CD4-positive, alpha-beta memory T cell (primary cell): ENCODE measurements at regions of chr2 and their contacts with region 1.

Region 1: GRCh38 chr2:176126929-176127773 is 2.4 kb upstream of the HOXD8 start:
- DNase-seq: peak; percentile 56 to 64 (median 58)
- H3K4me3 ChIP-seq: no peak overlapping the region
- H3K4me3 Mint-ChIP-seq: peak overlapping the region in 2 of 8 donors; percentile 7 to 17
- H3K27ac ChIP-seq: no peak overlapping the region
- H3K27ac Mint-ChIP-seq: peak overlapping the region in 2 of 7 donors; percentile 31 to 89
- H3K4me1 ChIP-seq: peaks cover 38% of the 10 kb centered on the region
- H3K4me1 Mint-ChIP-seq: peaks cover 10 to 45% (median 27%) of the 10 kb centered on the region in 4 donors
- H3K27me3 ChIP-seq: peaks cover 78% of the 10 kb centered on the region
- H3K27me3 Mint-ChIP-seq: peaks cover 61 to 63% of the 10 kb centered on the region in 2 donors

Region 2: DNA sequence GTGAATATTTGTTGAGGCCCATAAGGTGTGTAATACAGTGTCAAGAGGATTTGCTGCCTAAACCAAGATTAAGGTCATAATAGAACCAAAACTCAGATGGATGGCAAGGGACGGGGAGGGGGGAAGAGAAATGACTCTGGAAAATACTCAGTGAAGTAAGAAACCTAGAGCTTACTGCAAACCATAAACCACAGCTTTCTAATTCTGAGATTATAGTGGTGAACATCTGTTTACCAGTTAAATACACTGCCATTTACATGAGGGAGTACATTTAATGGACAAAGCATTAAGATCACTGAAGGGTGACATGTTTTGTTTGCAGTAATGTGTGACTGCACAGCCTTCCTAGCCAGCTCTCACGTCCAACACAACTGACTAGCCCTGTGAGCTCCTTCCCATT is 63.2 kb before region 1 on chr2:
- CTCF ChIA-PET with region 1: no interaction called
- POLR2A ChIA-PET with region 1: no interaction called
- intact Hi-C with region 1: no loop called
- DNase-seq: no peak
- H3K4me3 ChIP-seq: no peak overlapping the region
- H3K4me3 Mint-ChIP-seq: no peak overlapping the region
- H3K27ac ChIP-seq: no peak overlapping the region
- H3K27ac Mint-ChIP-seq: no peak overlapping the region
- H3K4me1 ChIP-seq: peaks cover 6% of the 10 kb centered on the region
- H3K4me1 Mint-ChIP-seq: peaks cover 0 to 17% (median 5%) of the 10 kb centered on the region in 4 donors
- H3K27me3 ChIP-seq: peaks cover 9% of the 10 kb centered on the region
- H3K27me3 Mint-ChIP-seq: peaks cover 48 to 49% of the 10 kb centered on the region in 2 donors

Region 3: GRCh38 chr2:176110975-176111663 is 16.0 kb before region 1 on chr2:
- CTCF ChIA-PET with region 1: interaction called, 12 read pairs
- POLR2A ChIA-PET with region 1: no interaction called
- intact Hi-C with region 1: no loop called
- DNase-seq: no peak
- H3K4me3 ChIP-seq: no peak overlapping the region
- H3K4me3 Mint-ChIP-seq: peak overlapping the region in 4 of 8 donors; percentile 17 to 32 (median 27)
- H3K27ac ChIP-seq: no peak overlapping the region
- H3K27ac Mint-ChIP-seq: peak overlapping the region in 4 of 7 donors; percentile 57 to 81 (median 70)
- H3K4me1 ChIP-seq: peaks cover 10% of the 10 kb centered on the region
- H3K4me1 Mint-ChIP-seq: peaks cover 9 to 26% (median 17%) of the 10 kb centered on the region in 4 donors
- H3K27me3 ChIP-seq: peaks cover 67% of the 10 kb centered on the region
- H3K27me3 Mint-ChIP-seq: peaks cover 62 to 70% of the 10 kb centered on the region in 2 donors

Region 4: DNA sequence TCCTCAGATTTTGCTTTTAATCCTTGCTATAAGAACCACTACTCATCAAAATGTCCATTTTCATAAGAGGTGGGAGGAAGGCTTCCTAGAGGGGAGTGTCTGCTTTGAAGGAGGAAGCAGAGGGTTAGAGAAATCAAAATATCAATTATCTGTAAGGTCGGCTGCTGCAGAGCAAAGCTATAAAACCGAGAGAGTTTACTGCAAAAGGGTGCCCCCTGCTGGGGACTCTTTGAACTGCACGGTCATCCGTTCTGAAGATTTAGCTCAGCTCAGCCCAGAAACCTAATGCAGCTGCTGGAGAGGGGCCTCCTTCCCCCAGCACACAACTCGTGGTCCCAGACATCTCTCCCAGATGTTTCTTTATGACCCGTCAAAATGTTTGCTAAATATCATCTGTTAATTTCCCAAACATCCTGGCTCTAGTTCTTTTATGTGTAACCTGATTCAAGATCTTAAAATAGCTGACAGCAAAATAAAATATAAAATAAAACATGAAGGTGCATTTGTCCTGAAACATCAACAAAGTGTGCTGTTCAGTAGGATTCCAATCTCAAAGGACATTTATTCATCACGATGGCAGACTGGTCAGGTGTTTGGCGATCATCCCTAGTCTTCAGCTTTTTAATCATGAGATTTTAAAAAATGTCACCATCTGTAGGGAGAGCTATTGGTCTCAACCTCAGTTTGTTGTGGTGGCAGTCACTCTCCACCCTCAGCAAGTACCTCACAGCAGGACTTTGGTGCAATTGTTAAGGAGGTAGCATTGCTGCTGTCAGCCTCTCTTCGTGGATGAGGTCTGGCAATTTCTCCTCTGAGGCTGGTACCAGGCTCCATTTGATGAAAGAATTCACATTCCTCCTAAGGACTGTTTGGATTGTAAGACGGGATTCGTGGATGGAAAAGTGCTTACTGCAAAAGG is 328.0 kb after region 1 on chr2:
- CTCF ChIA-PET with region 1: interaction called, 127 read pairs
- POLR2A ChIA-PET with region 1: interaction called, 12 read pairs
- intact Hi-C with region 1: loop called (anchors 1 kb)
- DNase-seq: peak; percentile 54 to 68 (median 63)
- H3K4me3 ChIP-seq: no peak overlapping the region
- H3K4me3 Mint-ChIP-seq: no peak overlapping the region
- H3K27ac ChIP-seq: no peak overlapping the region
- H3K27ac Mint-ChIP-seq: no peak overlapping the region
- H3K4me1 ChIP-seq: peaks cover 5% of the 10 kb centered on the region
- H3K4me1 Mint-ChIP-seq: peaks cover 0 to 2% (median 0%) of the 10 kb centered on the region in 4 donors
- H3K27me3 ChIP-seq: peaks cover 8% of the 10 kb centered on the region
- H3K27me3 Mint-ChIP-seq: peaks cover 10 to 29% of the 10 kb centered on the region in 2 donors

Region 5: DNA sequence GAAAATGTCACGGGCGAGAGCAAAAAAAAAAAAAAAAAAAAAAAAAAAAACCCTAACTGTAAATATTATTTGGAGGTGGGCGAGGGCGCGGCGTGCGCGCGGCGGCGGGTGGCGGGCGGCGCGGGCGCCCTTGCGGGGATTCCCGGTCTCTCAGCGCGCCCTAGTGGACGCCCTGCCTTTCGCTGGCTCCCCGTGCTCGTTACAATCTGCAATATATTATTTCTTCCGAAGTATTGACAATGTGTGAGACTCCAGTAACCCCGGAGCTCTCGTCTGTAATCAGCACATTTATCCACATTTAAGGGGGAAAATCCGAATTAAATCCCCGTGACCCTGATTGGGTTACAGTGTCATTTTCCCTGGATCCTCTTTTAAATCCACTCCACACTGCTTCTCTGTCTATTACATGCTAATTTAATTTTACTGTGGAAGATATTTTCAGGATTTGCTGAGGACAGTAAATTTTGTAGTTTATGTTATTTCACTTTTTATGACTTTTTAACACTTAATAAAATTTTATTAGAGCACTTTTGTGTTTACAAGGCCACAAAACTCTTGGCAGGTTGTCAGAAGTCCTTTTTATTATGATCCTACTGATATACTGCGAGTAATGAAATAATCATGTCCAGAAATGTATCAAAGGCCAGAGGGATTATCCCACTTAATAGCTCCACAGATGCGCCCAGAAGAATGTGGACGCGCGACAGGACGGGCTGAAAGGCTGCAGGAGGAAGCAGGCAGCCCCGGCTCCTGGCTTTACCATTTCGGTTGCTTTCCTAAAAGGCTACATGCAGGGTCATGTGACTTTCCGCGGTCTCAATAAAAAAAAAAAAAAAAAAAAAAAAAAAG is 511.2 kb after region 1 on chr2:
- CTCF ChIA-PET with region 1: interaction called, 4 read pairs
- POLR2A ChIA-PET with region 1: no interaction called
- intact Hi-C with region 1: loop called (anchors 1 kb)
- DNase-seq: peak in 4 of 5 donors; percentile 30 to 38 (median 37)
- H3K4me3 ChIP-seq: peak overlapping the region in 1 of 2 donors; percentile 41
- H3K4me3 Mint-ChIP-seq: peak overlapping the region; percentile 55 to 82 (median 68)
- H3K27ac ChIP-seq: no peak overlapping the region
- H3K27ac Mint-ChIP-seq: no peak overlapping the region
- H3K4me1 ChIP-seq: peaks cover 3% of the 10 kb centered on the region
- H3K4me1 Mint-ChIP-seq: peaks cover 0 to 11% (median 3%) of the 10 kb centered on the region in 4 donors
- H3K27me3 ChIP-seq: peaks cover 20% of the 10 kb centered on the region
- H3K27me3 Mint-ChIP-seq: peaks cover 37 to 52% of the 10 kb centered on the region in 2 donors

Region 6: DNA sequence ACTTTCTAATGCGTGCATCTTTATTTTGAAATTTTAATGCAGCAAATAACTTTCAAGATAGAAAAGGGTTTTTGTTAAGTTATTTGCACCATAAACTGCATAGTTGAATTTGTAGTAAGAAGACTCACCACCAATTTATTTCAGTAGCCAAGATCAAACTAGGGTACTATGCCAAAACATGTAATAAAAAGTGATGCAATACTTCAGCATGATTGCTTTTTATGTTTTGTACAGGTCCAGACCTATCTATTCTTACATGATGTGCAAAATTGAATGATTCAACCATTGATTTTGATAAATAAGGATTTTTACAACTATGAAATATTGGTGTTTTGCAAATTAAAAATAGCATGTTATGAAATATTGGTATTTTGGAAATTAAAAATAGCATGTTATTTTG is 1292.1 kb after region 1 on chr2:
- CTCF ChIA-PET with region 1: no interaction called
- POLR2A ChIA-PET with region 1: no interaction called
- intact Hi-C with region 1: loop called (anchors 2 kb)
- DNase-seq: no peak
- H3K4me3 ChIP-seq: no peak overlapping the region
- H3K4me3 Mint-ChIP-seq: no peak overlapping the region
- H3K27ac ChIP-seq: no peak overlapping the region
- H3K27ac Mint-ChIP-seq: no peak overlapping the region
- H3K4me1 ChIP-seq: peaks cover 5% of the 10 kb centered on the region
- H3K4me1 Mint-ChIP-seq: peaks cover 8 to 20% (median 18%) of the 10 kb centered on the region in 4 donors
- H3K27me3 ChIP-seq: no peaks in the 10 kb centered on the region
- H3K27me3 Mint-ChIP-seq: no peaks in the 10 kb centered on the region